Esophagus squamous epithelium (tissue), 5 donors: ENCODE measurements at regions of chr15 and their contacts with region 1.

Region 1: DNA sequence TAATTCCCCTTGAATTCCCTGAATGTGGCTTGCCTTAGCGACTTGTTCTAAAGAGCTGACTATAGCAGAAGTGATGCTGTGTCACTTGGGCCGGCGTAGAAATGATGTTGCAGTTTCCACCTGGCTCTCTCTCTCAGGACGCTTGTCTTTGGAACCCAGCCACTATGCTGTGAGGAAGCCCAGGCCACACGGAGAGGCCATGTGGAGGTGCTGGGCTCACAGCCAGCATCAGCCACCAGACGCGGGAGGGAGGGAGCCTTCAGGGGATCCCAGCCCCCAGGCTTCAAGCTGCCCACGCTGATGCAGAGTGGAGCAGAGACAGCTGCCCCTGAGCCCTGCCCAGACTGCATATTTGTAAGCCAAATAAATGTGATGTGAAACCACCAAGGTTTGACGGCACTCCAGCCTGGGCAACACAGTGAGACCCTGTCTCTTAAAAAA is 18.6 kb downstream of the RNU5B-1 start:
- DNase-seq: no peak
- H3K4me3 ChIP-seq: no peak overlapping the region
- H3K27ac ChIP-seq: no peak overlapping the region
- H3K4me1 ChIP-seq: no peaks in the 10 kb centered on the region
- H3K27me3 ChIP-seq: peaks cover 0 to 10% (median 0%) of the 10 kb centered on the region in 4 donors
- CTCF ChIP-seq: no peak
- POLR2A ChIP-seq: no peak

Region 2: DNA sequence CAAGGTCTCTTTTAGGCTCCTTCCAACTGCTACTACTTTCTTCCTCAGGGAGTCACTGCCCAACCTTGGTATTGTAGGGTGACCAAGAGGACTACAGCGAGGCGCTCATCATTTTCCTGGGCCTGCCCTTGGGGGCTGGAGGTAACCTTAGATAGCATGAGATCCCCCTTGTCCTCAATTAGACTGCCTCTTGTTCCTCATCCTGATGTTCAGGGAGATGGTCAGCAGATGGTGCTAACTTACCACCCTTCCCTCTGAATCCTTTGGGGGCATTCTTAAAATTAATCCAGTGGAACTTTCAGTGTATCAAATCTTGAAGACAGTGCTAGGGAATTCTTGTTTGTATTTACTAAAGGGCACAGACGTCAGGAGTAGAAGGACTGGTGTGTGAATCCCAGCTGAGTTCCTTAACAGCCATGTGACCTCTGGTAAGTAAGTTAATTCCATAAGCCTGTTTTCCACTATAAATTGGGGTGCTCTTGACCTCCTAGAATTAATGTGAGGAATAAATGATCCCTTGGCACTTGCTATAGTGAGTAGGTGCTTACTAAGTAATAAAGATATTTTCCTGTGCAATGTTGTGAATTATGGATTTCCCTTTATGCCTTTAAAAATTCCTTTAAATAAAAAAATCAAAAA is 133.9 kb before region 1 on chr15:
- intact Hi-C with region 1: no loop called
- DNase-seq: no peak
- H3K4me3 ChIP-seq: no peak overlapping the region
- H3K27ac ChIP-seq: no peak overlapping the region
- H3K4me1 ChIP-seq: peaks cover 0 to 9% (median 0%) of the 10 kb centered on the region in 3 donors
- H3K27me3 ChIP-seq: no peaks in the 10 kb centered on the region
- CTCF ChIP-seq: peak; percentile 18 to 59 (median 50)
- POLR2A ChIP-seq: no peak

Region 3: DNA sequence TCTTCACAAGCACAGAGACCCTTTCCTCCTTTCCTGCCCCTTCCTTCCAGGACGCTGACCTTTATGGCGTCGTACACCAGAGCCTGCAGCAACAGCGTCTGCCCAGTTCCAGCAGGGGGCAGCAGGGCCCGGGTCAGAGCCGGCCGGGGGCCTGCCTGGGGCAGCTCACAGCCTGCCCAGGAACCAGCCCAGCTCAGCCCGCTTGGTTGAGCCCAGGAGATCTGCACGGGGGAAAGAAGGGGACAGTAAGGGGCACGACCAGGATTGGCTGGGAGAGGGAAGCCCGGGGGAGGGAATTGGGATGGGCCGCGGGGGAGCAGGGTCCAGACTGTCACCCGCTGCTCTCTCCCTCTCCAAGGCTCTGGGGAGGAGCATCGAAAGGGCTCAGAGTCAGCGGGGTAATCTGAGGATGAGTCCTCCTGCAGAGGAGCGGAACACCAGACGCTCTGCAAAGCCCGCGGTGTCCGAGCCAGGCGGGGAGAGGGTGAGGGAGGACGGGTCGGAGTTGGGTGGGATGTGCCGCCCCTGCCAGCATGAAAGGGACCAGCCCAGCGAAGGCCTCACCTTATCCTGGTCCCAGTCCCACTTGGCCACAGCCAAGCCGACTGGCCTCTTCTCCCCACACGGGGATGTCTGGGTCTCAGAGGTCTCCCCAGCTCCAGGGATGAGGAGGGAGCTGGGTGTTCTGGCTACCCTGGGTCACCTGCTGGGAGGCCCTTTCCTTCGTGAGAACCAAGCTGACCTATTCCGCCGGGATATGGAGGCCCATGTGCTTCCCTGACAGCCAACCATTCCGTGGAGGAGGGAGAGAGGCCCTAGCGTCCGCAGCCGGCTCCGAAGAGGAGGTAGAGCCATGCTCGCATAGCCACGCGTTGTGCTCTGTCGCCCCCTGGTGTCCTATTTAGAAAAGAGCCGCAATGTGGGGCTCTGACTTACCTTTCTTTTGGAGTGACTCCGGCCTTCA is 62.1 kb after region 1 on chr15:
- intact Hi-C with region 1: loop called (anchors 5 kb)
- DNase-seq: peak; percentile 8
- H3K4me3 ChIP-seq: peak overlapping the region; percentile 21 to 66 (median 44)
- H3K27ac ChIP-seq: peak overlapping the region in 3 of 4 donors; percentile 28 to 63 (median 57)
- H3K4me1 ChIP-seq: peaks cover 16 to 23% (median 16%) of the 10 kb centered on the region in 3 donors
- H3K27me3 ChIP-seq: peaks cover 0 to 47% (median 0%) of the 10 kb centered on the region in 4 donors
- CTCF ChIP-seq: peak; percentile 81 to 90 (median 86)
- POLR2A ChIP-seq: no peak